Dorsolateral prefrontal cortex (tissue), 120 donors: ENCODE measurements at regions of chr15 and their contacts with region 1.

Region 1: GRCh38 chr15:55031727-55032126 is 165.0 kb downstream of the RSL24D1 start:
- DNase-seq: no peak
- H3K4me3 ChIP-seq: no peak overlapping the region
- H3K27ac ChIP-seq: no peak overlapping the region
- H3K27me3 ChIP-seq: peaks cover 0 to 8% (median 0%) of the 10 kb centered on the region in 45 donors
- CTCF ChIP-seq: no peak

Region 2: DNA sequence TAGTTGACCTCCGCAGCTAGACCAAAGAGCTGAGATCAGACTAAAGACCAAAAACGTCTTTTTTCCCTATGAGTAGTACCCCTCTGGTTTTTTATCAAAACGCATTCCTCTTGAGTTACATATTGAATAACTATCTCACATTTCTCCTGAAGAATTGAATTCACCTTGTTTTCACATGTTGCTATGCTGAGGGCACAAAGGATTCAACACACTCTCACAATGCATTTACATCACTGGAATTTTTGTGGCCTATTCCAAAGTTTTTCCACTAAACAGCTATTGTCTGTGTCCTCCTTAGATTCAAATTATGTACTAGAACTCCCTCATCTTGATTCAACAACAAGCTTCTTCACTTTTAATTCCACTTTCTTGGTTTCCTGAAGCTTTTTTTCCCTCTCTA is 52.5 kb after region 1 on chr15:
- intact Hi-C with region 1: loop called in 1 of 2 experiments (anchors 10 kb)
- DNase-seq: no peak
- H3K4me3 ChIP-seq: no peak overlapping the region
- H3K27ac ChIP-seq: no peak overlapping the region
- H3K27me3 ChIP-seq: no peaks in the 10 kb centered on the region
- CTCF ChIP-seq: no peak